IMR-90 (cell line): ENCODE measurements at regions of chr6 and their contacts with region 1.

Region 1: GRCh38 chr6:26156076-26156849 is 69.0 kb downstream of the HFE start:
- DNase-seq: peak; percentile 87
- ATAC-seq: peak; percentile 80
- H3K4me3 ChIP-seq: peak overlapping the region; percentile 82
- H3K27ac ChIP-seq: peak overlapping the region; percentile 81
- H3K4me1 ChIP-seq: 0 out of 2 replicates have a peak, but pooled peaks cover 1% of the 10 kb centered on the region
- H3K27me3 ChIP-seq: no peaks in the 10 kb centered on the region
- CTCF ChIP-seq: no peak
- POLR2A ChIP-seq: peak; percentile 99
- RAD21 ChIP-seq: no peak

Region 2: GRCh38 chr6:25981568-25982263 is 174.5 kb before region 1 on chr6:
- CTCF ChIA-PET with region 1: no interaction called
- POLR2A ChIA-PET with region 1: no interaction called
- dilution Hi-C with region 1: no loop called
- in situ Hi-C with region 1: no loop called
- intact Hi-C with region 1: no loop called
- DNase-seq: no peak
- ATAC-seq: no peak
- H3K4me3 ChIP-seq: no peak overlapping the region
- H3K27ac ChIP-seq: no peak overlapping the region
- H3K4me1 ChIP-seq: no peaks in the 10 kb centered on the region
- H3K27me3 ChIP-seq: no peaks in the 10 kb centered on the region
- CTCF ChIP-seq: no peak
- POLR2A ChIP-seq: no peak
- RAD21 ChIP-seq: no peak

Region 3: DNA sequence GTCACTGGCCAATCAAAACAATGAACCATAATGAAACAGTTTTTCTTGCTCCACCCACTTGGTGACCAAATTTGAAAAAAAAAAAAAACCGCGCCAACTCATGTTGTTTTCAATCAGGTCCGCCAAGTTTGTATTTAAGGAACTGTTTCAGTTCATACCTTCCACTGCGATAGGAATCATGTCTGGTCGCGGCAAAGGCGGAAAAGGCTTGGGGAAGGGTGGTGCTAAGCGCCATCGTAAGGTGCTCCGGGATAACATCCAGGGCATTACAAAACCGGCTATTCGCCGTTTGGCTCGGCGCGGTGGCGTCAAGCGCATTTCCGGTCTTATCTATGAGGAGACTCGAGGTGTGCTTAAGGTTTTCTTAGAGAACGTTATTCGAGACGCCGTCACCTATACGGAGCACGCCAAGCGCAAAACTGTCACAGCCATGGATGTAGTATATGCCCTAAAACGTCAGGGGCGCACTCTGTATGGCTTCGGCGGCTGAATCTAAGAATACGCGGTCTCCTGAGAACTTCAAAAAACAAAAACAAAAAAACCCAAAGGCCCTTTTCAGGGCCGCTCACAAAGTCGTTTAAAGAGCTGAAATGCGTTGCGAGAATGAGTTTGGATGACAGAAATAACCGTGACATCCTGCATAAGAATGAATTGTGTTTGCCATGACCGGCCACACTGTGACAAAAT is 52.4 kb before region 1 on chr6:
- CTCF ChIA-PET with region 1: no interaction called
- POLR2A ChIA-PET with region 1: interaction called, 20 read pairs
- dilution Hi-C with region 1: no loop called
- in situ Hi-C with region 1: no loop called
- intact Hi-C with region 1: loop called (anchors 1 kb)
- DNase-seq: peak; percentile 95
- ATAC-seq: peak; percentile 83
- H3K4me3 ChIP-seq: peak overlapping the region; percentile 45
- H3K27ac ChIP-seq: peak overlapping the region; percentile 52
- H3K4me1 ChIP-seq: peaks cover 5% of the 10 kb centered on the region; the same call in 1 of the 2 replicates
- H3K27me3 ChIP-seq: no peaks in the 10 kb centered on the region
- CTCF ChIP-seq: peak; percentile 39
- POLR2A ChIP-seq: peak; percentile 99
- RAD21 ChIP-seq: peak; percentile 44

Region 4: DNA sequence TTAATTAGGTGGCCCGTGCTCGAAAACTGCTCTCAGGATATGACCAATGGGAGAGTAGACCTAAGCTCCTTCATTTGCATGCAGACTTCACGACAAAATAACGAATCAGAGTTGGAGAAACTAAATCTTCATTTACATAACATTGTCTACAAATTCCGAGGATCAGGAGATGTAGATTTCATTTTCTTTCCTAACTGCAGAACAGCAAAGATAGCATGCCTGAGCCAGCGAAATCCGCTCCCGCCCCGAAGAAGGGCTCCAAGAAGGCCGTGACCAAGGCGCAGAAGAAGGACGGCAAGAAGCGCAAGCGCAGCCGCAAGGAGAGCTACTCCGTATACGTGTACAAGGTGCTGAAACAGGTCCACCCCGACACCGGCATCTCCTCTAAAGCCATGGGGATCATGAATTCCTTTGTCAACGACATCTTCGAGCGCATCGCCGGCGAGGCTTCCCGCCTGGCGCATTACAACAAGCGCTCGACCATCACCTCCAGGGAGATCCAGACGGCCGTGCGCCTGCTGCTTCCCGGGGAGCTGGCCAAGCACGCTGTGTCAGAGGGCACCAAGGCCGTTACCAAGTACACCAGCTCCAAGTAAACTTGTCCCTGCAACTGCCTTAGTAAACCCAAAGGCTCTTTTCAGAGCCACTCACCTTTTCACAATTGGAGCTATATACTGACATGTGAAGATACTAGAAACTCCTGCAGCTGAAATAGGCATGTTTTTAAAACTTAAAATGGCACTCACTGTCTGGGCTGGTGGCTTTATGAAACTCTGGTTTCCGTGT is 27.5 kb after region 1 on chr6:
- CTCF ChIA-PET with region 1: no interaction called
- POLR2A ChIA-PET with region 1: interaction called, 12 read pairs
- dilution Hi-C with region 1: no loop called
- in situ Hi-C with region 1: no loop called
- intact Hi-C with region 1: no loop called
- DNase-seq: peak; percentile 92
- ATAC-seq: peak; percentile 93
- H3K4me3 ChIP-seq: peak overlapping the region; percentile 40
- H3K27ac ChIP-seq: peak overlapping the region; percentile 15; the same call in 1 of the 2 replicates
- H3K4me1 ChIP-seq: no peaks in the 10 kb centered on the region; the same call in 1 of the 2 replicates
- H3K27me3 ChIP-seq: no peaks in the 10 kb centered on the region
- CTCF ChIP-seq: no peak
- POLR2A ChIP-seq: peak; percentile 80
- RAD21 ChIP-seq: no peak

Region 5: GRCh38 chr6:26216356-26216885 is 60.2 kb after region 1 on chr6:
- CTCF ChIA-PET with region 1: no interaction called
- POLR2A ChIA-PET with region 1: interaction called, 13 read pairs
- dilution Hi-C with region 1: no loop called
- in situ Hi-C with region 1: no loop called
- intact Hi-C with region 1: no loop called
- DNase-seq: peak; percentile 99
- ATAC-seq: peak; percentile 81
- H3K4me3 ChIP-seq: peak overlapping the region; percentile 47
- H3K27ac ChIP-seq: peak overlapping the region; percentile 22
- H3K4me1 ChIP-seq: no peaks in the 10 kb centered on the region
- H3K27me3 ChIP-seq: no peaks in the 10 kb centered on the region
- CTCF ChIP-seq: no peak
- POLR2A ChIP-seq: peak; percentile 99
- RAD21 ChIP-seq: no peak